ENCODE measurements at regions of chr10 and their contacts with region 1.

Region 1: DNA sequence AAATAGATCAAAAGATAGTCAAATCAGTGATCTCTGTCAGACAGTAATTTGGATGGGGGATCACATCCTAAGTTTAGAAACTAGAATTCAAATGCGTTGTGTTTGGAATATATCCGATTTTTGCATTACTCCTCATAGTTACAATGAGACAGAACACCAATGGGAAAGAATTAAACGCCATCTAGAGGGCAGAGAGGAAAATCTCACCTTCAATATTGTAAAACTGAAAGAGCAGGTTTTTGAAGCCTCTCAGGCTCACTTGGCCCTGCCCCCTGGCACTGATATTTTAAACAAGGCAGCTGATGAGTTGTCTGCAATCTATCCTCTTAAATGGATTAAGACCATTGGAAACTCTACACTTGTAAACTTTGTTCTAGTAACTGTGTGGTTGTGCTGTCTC is 17.7 kb downstream of the FRG2B start:
- DNase-seq: no peak
- H3K4me3 Mint-ChIP-seq: no peak overlapping the region
- H3K27ac Mint-ChIP-seq: no peak overlapping the region
- H3K4me1 Mint-ChIP-seq: no peaks in the 10 kb centered on the region
- H3K27me3 Mint-ChIP-seq: peaks cover 31% of the 10 kb centered on the region

Region 2: GRCh38 chr10:133438711-133439273 is 170.1 kb before region 1 on chr10:
- intact Hi-C with region 1: loop called (anchors 5 kb)
- DNase-seq: no peak
- H3K4me3 Mint-ChIP-seq: no peak overlapping the region
- H3K27ac Mint-ChIP-seq: no peak overlapping the region
- H3K4me1 Mint-ChIP-seq: peaks cover 11% of the 10 kb centered on the region
- H3K27me3 Mint-ChIP-seq: peaks cover 13% of the 10 kb centered on the region

Measured in activated T-helper 2 cell treated with anti-CD3 and anti-CD28 coated beads, Interferon-gamma antibody, Interleukin-2, Interleukin-4, amounts not matched to agents 10 μg/mL and 5 μg/mL and 100 μg/mL, durations not matched to agents 14 hours and 24 hours and 36 hours (primary cell).